ENCODE measurements at regions of chr17 and their contacts with region 1.

Region 1: DNA sequence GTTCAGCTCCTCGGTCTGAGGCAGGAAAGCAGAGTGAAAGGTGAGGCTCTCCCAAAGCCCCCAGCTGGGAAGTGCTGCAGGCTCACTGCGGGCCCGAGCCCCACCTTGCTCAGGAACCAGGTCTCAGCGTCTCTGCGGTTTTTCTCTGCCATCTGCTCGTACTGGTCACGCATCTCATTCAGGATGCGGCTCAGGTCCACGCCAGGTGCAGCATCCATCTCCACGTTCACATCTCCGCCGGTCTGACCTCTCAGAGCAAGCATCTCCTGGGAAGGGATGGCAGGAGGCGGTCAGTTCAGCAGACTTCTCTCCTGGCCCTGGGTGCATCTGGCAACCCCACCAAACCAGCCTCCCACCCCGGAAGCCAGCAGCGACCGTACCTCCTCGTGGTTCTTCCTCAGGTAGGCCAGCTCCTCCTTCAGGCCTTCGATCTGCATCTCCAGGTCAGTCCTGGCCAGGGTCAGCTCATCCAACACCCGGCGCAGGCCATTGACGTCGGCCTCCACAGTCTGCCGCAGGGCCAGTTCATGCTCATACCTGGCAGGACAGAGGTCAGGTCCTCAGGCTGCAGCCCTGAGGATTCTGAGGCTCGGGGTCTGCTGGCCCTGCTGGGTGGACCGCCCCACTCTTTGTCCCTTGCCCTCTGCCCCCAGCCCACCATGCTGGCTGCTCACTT is 1.5 kb downstream of the KRT16 start:
- DNase-seq: no peak
- H3K4me3 ChIP-seq: no peak overlapping the region
- H3K27ac ChIP-seq: no peak overlapping the region
- H3K4me1 ChIP-seq: no peaks in the 10 kb centered on the region; a peak in 1 of 4 replicates
- H3K27me3 ChIP-seq: peaks cover 20% of the 10 kb centered on the region; the same call in 1 of the 2 replicates
- CTCF ChIP-seq: no peak
- EP300 ChIP-seq: no peak
- RAD21 ChIP-seq: no peak

Region 2: DNA sequence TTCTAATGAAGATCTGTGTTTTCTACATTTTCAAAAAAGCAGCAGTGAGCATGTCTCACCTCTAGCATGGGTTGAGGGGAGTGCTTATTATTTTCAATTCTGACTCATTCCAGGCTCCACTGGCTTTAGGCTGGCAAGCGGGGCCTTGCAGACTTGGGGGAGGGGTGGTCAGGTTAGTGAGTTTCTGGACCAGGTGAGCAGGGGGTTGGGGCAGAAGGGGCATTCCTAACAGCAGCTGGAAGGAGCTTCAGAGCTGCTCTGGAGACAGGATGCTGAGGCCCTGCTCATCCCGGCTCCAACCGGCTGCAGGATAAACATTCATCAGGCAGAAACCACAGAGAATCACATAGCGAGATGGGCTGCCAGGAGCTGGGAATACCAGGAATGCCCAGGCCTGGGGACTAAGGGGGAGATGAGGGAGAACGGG is 72.5 kb before region 1 on chr17:
- CTCF ChIA-PET with region 1: no interaction called
- POLR2A ChIA-PET with region 1: no interaction called
- DNase-seq: no peak
- H3K4me3 ChIP-seq: no peak overlapping the region
- H3K27ac ChIP-seq: peak overlapping the region; percentile 26 to 77; a peak in 2 of 4 replicates
- H3K4me1 ChIP-seq: peaks cover 17 to 37% of the 10 kb centered on the region in 2 experiments; a peak in 3 of 4 replicates
- H3K27me3 ChIP-seq: no peaks in the 10 kb centered on the region
- CTCF ChIP-seq: no peak
- EP300 ChIP-seq: no peak
- RAD21 ChIP-seq: no peak

Region 3: GRCh38 chr17:41655611-41656351 is 44.7 kb after region 1 on chr17:
- CTCF ChIA-PET with region 1: interaction called, 20 read pairs
- POLR2A ChIA-PET with region 1: no interaction called
- DNase-seq: no peak
- H3K4me3 ChIP-seq: no peak overlapping the region
- H3K27ac ChIP-seq: no peak overlapping the region
- H3K4me1 ChIP-seq: no peaks in the 10 kb centered on the region; a peak in 1 of 4 replicates
- H3K27me3 ChIP-seq: no peaks in the 10 kb centered on the region
- CTCF ChIP-seq: no peak
- EP300 ChIP-seq: no peak
- RAD21 ChIP-seq: no peak